ENCODE measurements at regions of chr5 and their contacts with region 1.

Region 1: DNA sequence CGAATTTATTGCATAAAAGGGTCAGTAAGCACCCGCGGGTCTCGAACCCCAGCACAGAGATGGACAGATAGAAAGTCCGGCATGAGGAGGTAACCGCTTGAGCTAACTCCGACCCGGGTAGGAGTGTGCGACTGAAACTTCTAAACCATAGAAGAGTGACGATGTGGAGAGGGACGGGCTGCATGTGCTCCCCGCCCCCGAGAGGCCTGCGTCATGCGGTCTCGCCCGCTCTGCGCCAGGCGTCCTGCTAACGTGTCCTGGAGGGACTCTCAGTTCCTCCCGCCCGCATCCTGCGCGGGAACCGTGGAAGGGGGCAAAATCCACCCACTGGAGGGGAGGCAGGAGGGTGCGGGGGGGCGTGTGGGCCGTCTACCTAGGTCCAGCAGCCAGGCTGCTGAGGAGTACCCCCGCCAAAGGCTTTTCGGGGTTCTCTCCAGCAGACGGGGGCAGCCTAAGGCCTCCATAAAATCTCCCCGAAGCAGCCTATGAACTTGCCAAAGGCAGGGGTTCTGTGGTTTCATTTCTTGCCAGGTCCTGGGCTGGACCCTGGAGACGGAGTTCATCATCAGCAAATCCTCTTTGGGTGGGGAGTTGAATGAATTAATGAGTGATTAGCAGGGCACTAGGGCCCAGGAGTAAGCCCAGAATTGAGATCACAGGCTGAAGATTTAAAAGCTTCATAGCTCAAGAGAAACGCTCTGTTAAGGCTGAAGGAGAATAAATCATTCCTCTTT is 51.9 kb downstream of the TGFBI start:
- DNase-seq: peak; percentile 91
- H3K4me3 ChIP-seq: peak overlapping the region; percentile 62
- H3K27ac ChIP-seq: peak overlapping the region; percentile 84
- H3K27me3 ChIP-seq: no peaks in the 10 kb centered on the region
- CTCF ChIP-seq: no peak

Region 2: GRCh38 chr5:135887351-135887864 is 193.2 kb before region 1 on chr5:
- CTCF ChIA-PET with region 1: interaction called, 108 read pairs
- POLR2A ChIA-PET with region 1: no interaction called
- DNase-seq: peak; percentile 39
- H3K4me3 ChIP-seq: no peak overlapping the region
- H3K27ac ChIP-seq: no peak overlapping the region
- H3K27me3 ChIP-seq: peaks cover 15% of the 10 kb centered on the region
- CTCF ChIP-seq: peak; percentile 88

Region 3: DNA sequence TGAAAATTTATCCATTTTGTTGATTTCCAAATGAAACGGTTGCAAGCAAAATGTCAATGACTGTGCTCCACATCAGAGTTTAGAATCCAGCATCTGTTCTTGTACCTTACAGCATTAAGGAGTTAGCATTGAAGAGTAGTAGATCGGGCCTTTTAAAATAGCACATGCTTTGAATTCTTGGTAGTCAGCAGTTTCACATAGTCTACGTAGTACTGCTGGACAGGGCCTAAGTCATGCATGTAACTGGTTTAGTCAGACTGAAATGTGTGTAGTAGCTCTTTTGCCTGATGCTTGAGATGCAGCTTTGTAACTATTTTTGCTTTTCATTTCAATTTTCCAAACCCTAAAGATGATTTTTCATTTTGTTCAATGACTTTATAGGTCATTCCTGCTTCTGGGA is 145.7 kb before region 1 on chr5:
- CTCF ChIA-PET with region 1: interaction called, 26 read pairs
- POLR2A ChIA-PET with region 1: no interaction called
- DNase-seq: peak; percentile 13
- H3K4me3 ChIP-seq: no peak overlapping the region
- H3K27ac ChIP-seq: no peak overlapping the region
- H3K27me3 ChIP-seq: peaks cover 31% of the 10 kb centered on the region
- CTCF ChIP-seq: no peak

Region 4: DNA sequence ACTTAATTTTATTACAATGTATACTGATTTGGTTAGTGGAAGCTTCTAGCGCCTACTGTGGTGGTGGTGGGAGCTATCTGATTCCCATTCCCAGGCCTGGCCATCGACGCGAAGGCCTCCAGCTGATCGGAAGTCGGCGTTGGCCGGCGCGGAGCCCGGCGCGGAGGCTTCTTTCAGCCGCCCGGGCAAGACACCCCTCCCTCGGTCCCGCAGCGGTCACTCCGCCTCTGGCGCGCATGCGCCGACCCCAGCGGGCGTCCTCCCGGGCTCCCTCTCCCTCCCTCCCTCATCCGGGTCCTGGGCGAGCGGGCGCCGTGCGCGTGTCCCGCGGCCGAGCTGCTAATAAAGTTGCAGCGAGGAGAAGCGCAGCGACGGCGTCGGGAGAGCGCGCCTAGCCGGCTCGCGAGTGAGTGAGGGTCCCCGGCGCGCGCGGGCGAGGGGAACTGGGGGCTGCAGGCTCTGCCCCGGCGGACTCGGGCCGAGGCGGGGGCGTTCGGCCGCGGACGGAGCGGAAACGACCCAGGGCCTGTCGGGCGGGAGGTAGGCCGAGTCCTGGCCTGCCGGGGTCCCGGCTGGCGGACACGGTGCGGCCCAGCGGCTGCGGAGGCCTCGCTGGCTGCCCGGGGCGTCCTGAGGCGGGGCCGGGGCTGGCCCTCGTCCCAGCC is 52.0 kb after region 1 on chr5 and contains the start of gene SMAD5:
- CTCF ChIA-PET with region 1: interaction called, 14 read pairs
- POLR2A ChIA-PET with region 1: interaction called, 6 read pairs
- DNase-seq: peak; percentile 89
- H3K4me3 ChIP-seq: peak within 1 kb of the TSS; percentile 93
- H3K27ac ChIP-seq: peak within 1 kb of the TSS; percentile 82
- H3K27me3 ChIP-seq: peaks cover 9% of the 10 kb centered on the region
- CTCF ChIP-seq: no peak
- polyA plus RNA-seq, gene SMAD5: 66.1 and 98.3 TPM in 2 replicates

Region 5: GRCh38 chr5:136212252-136212721 is 131.6 kb after region 1 on chr5:
- CTCF ChIA-PET with region 1: interaction called, 11 read pairs
- POLR2A ChIA-PET with region 1: no interaction called
- DNase-seq: no peak
- H3K4me3 ChIP-seq: no peak overlapping the region
- H3K27ac ChIP-seq: no peak overlapping the region
- H3K27me3 ChIP-seq: peaks cover 11% of the 10 kb centered on the region
- CTCF ChIP-seq: peak; percentile 92

Measured in AG04450 (cell line).